ENCODE measurements at regions of chr20 and their contacts with region 1.

Region 1: DNA sequence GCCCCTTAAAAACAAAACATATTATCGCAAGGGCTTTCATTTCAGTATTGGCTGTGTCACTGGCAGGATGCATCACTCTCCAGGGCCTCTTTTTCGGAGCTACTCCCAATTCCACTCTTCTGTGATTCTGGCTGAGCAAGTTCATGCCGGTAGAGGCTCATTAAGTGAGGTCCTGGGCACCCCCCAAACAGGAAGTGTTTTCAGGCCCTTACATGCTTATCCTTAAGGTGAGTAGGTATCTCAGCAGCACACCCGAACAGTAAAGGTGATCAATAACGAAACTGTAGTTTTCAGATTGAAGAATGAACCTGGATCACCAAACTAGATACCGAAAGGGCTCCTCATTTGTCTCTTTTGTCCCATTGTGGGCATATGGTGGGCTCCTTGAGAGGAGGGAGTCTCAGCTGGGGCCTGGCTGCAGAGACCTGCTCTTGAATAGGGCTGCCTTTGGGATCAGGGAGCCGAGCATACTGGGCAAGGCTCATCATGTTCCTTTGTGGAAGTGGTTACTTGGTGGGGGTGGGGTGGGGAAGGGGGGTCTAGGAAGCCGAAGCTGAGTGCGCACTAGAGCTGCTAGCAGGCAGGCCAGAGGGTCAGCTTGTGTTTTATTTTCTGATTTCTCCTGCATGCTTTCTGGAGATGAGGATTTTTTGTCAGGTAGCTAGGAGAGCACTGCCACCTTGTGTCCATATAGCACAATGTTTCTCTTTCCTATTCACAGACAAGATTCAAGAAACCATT is 65.2 kb downstream of the CDS2 start:
- DNase-seq: peak; percentile 81
- H3K4me3 ChIP-seq: no peak overlapping the region
- H3K27ac ChIP-seq: peak overlapping the region; percentile 77
- H3K4me1 ChIP-seq: peaks cover 31% of the 10 kb centered on the region
- CTCF ChIP-seq: peak; percentile 93

Region 2: GRCh38 chr20:4607287-4607713 is 584.7 kb before region 1 on chr20:
- CTCF ChIA-PET with region 1: no interaction called
- POLR2A ChIA-PET with region 1: no interaction called
- intact Hi-C with region 1: loop called (anchors 5 kb)
- DNase-seq: peak; percentile 74
- H3K4me3 ChIP-seq: no peak overlapping the region
- H3K27ac ChIP-seq: no peak overlapping the region
- H3K4me1 ChIP-seq: no peaks in the 10 kb centered on the region
- CTCF ChIP-seq: peak; percentile 98

Region 3: GRCh38 chr20:4956200-4956810 is 235.7 kb before region 1 on chr20:
- CTCF ChIA-PET with region 1: no interaction called
- POLR2A ChIA-PET with region 1: no interaction called
- intact Hi-C with region 1: loop called (anchors 10 kb)
- DNase-seq: peak; percentile 77
- H3K4me3 ChIP-seq: no peak overlapping the region
- H3K27ac ChIP-seq: no peak overlapping the region
- H3K4me1 ChIP-seq: peaks cover 4% of the 10 kb centered on the region
- CTCF ChIP-seq: peak; percentile 99

Region 4: DNA sequence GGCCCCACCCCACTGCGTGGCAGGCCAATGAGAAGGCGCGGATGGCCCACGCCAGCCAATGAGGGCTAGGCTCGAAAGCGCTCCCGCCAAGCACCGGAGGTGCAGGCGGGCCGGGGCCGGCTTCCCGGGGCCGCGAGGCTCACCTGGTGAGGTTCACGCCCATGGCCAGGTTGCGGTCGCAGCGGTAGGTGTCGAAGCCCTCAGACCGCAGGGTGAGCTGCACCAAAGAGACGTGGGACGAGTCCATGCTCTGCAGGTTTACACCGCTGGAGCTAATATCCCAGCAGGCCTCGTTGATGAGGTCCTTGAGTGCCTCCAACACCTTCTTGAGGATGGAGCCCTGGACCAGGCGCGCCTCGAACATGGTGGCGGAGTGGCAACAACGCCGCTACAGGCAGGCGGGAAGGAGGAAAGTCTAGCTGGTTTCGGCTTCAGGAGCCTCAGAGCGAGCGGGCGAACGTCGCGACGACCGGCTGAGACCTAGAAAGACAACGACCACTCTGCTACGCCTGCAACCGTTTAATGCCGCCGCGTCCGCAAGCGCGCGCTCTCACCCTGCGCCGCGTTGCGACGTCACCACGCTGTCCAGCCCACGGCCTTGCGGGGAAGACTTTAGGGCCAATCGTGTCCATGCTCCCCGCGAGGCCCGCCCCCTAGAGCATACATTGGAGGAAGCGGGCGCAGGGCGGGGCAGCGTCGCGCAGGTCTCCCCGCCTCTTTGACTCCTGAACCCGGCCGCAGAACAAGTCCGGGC is 72.4 kb before region 1 on chr20 and contains the start of gene PCNA:
- CTCF ChIA-PET with region 1: interaction called, 66 read pairs
- POLR2A ChIA-PET with region 1: interaction called, 19 read pairs
- intact Hi-C with region 1: loop called (anchors 2 kb)
- DNase-seq: peak; percentile 99
- H3K4me3 ChIP-seq: peak within 1 kb of the TSS; percentile 98
- H3K27ac ChIP-seq: peak within 1 kb of the TSS; percentile 89
- H3K4me1 ChIP-seq: peaks cover 47% of the 10 kb centered on the region
- CTCF ChIP-seq: no peak
- total RNA-seq, gene PCNA: 499 and 567 TPM in 2 replicates

Region 5: DNA sequence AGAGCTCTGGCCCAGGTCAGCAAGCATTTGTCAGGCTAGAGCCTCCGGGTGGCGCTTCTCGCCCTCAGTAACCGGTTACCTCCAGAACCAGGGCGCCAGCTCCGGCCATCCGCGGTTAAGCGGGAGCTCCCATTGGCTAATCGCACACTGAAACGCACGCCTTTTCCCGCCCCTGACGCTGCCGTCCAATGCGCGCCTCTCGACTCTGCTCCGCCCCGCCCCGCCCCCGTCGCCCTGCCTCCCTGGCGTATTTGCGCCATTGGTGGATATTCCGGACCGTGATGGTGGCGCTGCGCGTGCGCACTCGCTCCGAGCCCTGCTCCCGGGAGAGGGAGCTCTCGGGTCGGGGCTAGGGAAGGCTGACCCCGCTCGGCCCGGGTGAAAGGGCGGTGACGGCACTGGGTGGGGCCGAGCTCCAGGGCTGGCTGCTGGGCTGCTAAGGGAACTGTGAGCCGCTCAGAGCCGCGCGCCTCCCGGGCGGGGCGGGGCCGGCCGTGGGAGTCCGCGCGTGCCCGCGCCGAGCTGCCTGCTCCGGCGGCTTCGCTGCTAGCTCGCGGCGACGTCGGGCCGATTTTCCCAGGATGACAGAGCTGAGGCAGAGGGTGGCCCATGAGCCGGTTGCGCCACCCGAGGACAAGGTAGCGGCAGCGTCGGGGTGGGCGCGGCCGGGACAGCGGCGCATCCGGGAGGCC is 65.3 kb before region 1 on chr20 and contains the start of gene CDS2:
- CTCF ChIA-PET with region 1: interaction called, 66 read pairs
- POLR2A ChIA-PET with region 1: interaction called, 40 read pairs
- intact Hi-C with region 1: loop called (anchors 1 kb)
- DNase-seq: peak; percentile 99
- H3K4me3 ChIP-seq: peak within 1 kb of the TSS; percentile 81
- H3K27ac ChIP-seq: peak within 1 kb of the TSS; percentile 80
- H3K4me1 ChIP-seq: peaks cover 34% of the 10 kb centered on the region
- CTCF ChIP-seq: peak; percentile 80
- total RNA-seq, gene CDS2: 16.5 and 16.6 TPM in 2 replicates

Region 6: GRCh38 chr20:5416086-5416485 is 224.1 kb after region 1 on chr20:
- CTCF ChIA-PET with region 1: no interaction called
- POLR2A ChIA-PET with region 1: no interaction called
- intact Hi-C with region 1: no loop called
- DNase-seq: no peak
- H3K4me3 ChIP-seq: no peak overlapping the region
- H3K27ac ChIP-seq: no peak overlapping the region
- H3K4me1 ChIP-seq: no peaks in the 10 kb centered on the region
- CTCF ChIP-seq: no peak

Region 7: DNA sequence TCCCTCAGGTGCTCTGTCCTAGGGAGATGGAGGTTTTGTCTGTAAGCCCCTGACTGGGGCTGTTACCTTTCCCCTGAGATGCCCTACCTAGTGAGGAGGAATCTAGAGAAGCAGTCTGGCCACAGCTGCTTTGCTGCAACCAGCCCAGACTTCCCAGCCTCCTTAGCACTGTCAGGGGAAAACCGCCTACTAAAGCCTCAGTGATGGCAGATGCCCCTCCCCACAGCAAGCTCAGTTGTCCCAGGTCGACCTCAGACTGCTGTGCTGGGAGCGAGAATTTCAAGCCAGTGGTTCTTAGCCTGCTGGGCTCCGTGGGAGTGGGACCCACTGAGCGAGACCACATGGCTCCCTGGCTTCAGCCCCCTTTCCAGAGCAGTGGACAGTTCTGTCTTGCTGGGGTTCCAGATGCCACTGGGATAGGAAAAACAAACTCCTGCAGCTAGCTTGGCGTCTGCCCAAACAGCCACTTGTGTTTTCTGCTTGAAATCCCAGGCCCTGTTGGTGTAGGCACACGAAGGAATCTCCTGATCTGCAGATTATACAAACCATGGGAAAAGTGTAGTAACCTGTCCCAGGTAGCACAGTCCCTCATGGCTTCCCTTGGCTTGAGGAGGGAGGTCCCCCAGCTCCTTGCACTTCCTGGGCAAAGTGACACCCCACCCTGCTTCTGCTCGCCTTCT is 271.1 kb after region 1 on chr20:
- CTCF ChIA-PET with region 1: no interaction called
- POLR2A ChIA-PET with region 1: no interaction called
- intact Hi-C with region 1: no loop called
- DNase-seq: no peak
- H3K4me3 ChIP-seq: no peak overlapping the region
- H3K27ac ChIP-seq: no peak overlapping the region
- H3K4me1 ChIP-seq: no peaks in the 10 kb centered on the region
- CTCF ChIP-seq: no peak